Endothelial cell of umbilical vein (primary cell): ENCODE measurements at regions of chr4 and their contacts with region 1.

Region 1: DNA sequence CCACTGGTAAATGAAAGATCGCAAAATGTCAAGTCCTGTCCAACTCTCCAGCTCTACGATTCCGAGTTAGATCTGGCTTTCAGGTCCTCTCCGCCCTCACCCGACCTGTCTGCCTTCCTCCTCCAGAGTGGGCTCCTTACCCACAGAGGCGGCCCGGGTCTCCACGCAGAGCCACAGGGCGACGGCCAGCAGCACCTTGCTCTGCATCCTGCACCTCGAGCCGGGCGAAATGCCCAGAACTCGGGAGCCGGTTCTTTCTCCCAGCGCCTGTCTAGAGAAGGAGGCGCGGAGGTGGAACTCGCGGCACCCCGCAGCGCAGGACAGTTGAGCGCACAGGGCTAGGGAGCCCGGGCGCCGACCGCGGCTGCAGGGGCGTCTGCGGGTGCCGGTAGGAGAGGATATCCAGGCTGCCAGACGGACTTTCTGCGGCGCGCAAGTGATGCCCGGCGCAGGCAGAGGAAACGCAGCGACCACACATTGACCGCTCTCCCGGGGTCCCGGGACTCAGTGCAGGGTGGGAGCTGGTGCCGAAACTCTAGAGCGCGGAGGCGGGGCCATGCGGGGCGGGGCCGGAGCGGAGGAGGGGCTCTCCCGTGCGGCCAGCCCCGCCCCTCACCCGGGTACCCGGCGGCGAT is at the start of gene KDR:
- DNase-seq: peak; percentile 68
- H3K4me3 ChIP-seq: peak within 1 kb of the TSS; percentile 92 to 94 (median 93)
- H3K27ac ChIP-seq: peak within 1 kb of the TSS; percentile 54
- H3K4me1 ChIP-seq: peaks cover 41% of the 10 kb centered on the region
- H3K27me3 ChIP-seq: no peaks in the 10 kb centered on the region
- CTCF ChIP-seq: no peak
- POLR2A ChIP-seq: peak; percentile 98
- total RNA-seq, gene KDR: 139 and 145 TPM in 2 replicates

Region 2: DNA sequence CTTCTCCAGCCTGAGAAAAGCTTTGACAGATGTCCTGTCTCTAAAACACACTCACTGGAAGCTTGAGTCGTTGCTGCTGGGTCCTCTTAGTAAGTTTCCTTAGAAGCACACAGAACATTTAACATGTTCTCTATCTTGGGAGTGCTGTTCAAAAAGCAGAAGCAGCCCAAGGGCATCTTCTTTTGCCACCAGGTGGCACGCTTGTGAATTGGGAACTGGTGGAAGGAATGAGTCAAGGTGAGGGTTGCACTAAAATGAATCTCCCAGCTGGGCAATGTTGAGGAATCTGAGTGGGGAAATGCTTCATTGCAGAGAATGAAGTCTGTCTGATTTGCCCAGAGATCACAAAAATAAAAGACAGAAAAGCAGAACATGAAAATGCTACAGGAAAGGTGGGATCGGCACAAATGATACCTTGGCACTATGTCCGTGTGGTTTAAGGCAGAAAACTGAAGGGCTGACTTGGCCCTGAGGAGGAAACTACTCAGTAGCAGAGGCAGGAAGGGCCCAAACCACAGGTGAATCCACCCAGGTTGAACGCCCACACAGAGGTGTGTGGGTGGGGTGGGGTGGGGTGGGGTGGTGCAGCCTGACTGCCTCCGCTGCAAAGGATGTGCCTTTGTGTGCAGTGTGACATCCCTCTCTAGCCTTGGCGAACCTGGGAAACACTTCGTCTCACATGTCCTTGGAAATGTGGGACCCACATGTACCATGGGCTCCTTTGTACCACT is 441.4 kb before region 1 on chr4:
- CTCF ChIA-PET with region 1: no interaction called
- POLR2A ChIA-PET with region 1: no interaction called
- dilution Hi-C with region 1: no loop called
- intact Hi-C with region 1: no loop called
- DNase-seq: peak; percentile 39
- H3K4me3 ChIP-seq: no peak overlapping the region
- H3K27ac ChIP-seq: no peak overlapping the region
- H3K4me1 ChIP-seq: no peaks in the 10 kb centered on the region
- H3K27me3 ChIP-seq: peaks cover 0 to 1% of the 10 kb centered on the region in 2 experiments
- CTCF ChIP-seq: peak; percentile 20 to 36
- POLR2A ChIP-seq: no peak

Region 3: DNA sequence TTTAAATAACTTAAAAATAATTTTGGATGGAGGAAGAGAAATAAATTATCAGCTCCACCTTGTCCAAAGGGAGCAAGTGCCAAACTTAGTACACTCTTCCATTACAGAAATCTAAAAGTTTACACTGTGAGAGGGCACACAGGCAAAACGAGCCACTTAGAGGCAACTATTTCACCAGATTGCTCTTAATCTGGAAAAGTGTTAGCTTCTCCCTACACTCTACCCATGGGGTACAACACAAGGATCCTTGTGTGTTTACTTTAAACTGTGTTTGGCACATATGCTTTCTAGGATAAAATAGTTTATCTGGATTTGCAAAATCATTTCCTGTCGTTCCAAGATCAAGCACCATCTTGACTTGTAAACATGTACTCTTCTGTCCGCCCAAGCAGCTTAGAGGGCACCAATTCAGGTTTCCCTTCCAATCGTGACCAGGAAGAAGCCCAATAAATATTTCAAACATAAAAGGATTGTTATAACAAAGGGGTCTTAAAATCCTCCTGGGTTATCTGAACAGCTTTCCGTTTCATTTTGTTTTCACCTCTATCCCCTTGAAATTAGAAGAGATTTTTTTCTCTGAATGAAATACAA is 29.2 kb after region 1 on chr4:
- CTCF ChIA-PET with region 1: interaction called, 4 read pairs
- POLR2A ChIA-PET with region 1: interaction called, 5 read pairs
- dilution Hi-C with region 1: no loop called
- intact Hi-C with region 1: loop called (anchors 1 kb)
- DNase-seq: peak; percentile 75
- H3K4me3 ChIP-seq: no peak overlapping the region
- H3K27ac ChIP-seq: no peak overlapping the region
- H3K4me1 ChIP-seq: peaks cover 12% of the 10 kb centered on the region
- H3K27me3 ChIP-seq: no peaks in the 10 kb centered on the region
- CTCF ChIP-seq: no peak
- POLR2A ChIP-seq: no peak

Region 4: GRCh38 chr4:55184600-55185523 is 59.7 kb after region 1 on chr4:
- CTCF ChIA-PET with region 1: interaction called, 17 read pairs
- POLR2A ChIA-PET with region 1: interaction called, 27 read pairs
- dilution Hi-C with region 1: no loop called
- intact Hi-C with region 1: loop called (anchors 1 kb)
- DNase-seq: no peak
- H3K4me3 ChIP-seq: no peak overlapping the region
- H3K27ac ChIP-seq: peak overlapping the region; percentile 63
- H3K4me1 ChIP-seq: peaks cover 64% of the 10 kb centered on the region
- H3K27me3 ChIP-seq: no peaks in the 10 kb centered on the region
- CTCF ChIP-seq: peak in 1 of 2 donors; percentile 30
- POLR2A ChIP-seq: no peak

Region 5: DNA sequence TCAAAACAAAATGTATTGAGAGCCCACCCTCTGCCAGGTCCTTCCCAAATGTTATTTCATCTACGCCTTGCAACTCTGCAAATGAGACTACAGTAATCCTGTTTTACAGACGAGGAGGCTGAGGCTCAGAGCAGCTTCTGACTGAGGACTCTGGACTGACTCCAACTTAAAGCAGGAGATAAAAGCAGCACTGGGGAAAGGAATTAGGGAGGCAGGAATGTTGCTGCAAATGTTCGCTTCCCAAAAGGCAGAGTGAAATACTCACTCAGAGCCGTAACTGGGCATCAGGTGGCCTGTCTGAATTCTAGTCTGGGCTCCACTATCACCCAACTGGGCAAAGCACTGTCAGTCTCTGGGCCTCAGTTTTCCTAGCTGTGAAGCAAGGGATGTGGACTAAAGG is 126.1 kb after region 1 on chr4:
- CTCF ChIA-PET with region 1: interaction called, 3 read pairs
- POLR2A ChIA-PET with region 1: interaction called, 4 read pairs
- dilution Hi-C with region 1: no loop called
- intact Hi-C with region 1: loop called (anchors 2 kb)
- DNase-seq: peak; percentile 35
- H3K4me3 ChIP-seq: no peak overlapping the region
- H3K27ac ChIP-seq: peak overlapping the region; percentile 24
- H3K4me1 ChIP-seq: peaks cover 41% of the 10 kb centered on the region
- H3K27me3 ChIP-seq: no peaks in the 10 kb centered on the region
- CTCF ChIP-seq: no peak
- POLR2A ChIP-seq: no peak

Region 6: GRCh38 chr4:55312489-55313101 is 187.4 kb after region 1 on chr4:
- CTCF ChIA-PET with region 1: interaction called, 10 read pairs
- POLR2A ChIA-PET with region 1: interaction called, 4 read pairs
- dilution Hi-C with region 1: no loop called
- intact Hi-C with region 1: no loop called
- DNase-seq: peak; percentile 63
- H3K4me3 ChIP-seq: no peak overlapping the region
- H3K27ac ChIP-seq: no peak overlapping the region
- H3K4me1 ChIP-seq: no peaks in the 10 kb centered on the region
- H3K27me3 ChIP-seq: no peaks in the 10 kb centered on the region
- CTCF ChIP-seq: peak; percentile 60 to 76
- POLR2A ChIP-seq: no peak

Region 7: DNA sequence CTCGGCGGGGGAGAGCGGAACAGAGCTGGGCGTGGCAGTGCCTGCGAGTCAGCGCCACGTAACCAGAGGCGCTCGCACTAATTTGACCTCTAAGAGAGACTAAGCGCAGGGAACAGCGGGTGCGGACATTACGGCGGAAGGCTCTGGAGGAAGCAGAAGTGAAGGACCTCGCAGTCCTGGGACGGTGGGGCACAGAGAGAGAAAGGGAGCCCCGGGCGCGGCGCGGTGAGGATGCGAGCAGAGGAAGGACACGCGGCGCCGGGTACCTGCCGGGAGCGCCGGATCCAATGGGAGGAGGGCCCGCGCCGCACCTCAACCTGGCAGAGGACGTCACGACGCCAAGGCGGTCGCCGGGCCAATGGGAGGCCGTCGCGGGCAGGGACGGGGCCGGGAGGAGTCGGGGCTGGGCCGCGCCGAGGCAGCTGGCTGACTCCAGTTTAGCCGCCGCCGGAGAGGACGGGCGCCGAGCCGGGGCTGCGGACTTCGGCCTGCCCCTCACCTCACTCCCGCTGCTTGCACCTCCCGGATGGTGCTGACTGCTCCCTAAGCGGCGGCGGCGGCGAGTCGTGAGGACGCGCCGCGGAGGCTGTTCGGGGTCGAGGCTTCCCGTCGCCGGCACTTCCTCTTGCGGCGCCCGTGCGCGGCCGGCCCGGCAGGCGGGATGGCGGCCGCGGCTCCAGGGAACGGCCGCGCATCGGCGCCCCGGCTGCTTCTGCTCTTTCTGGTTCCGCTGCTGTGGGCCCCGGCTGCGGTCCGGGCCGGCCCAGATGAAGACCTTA is 270.5 kb after region 1 on chr4 and contains the start of gene TMEM165:
- CTCF ChIA-PET with region 1: no interaction called
- POLR2A ChIA-PET with region 1: no interaction called
- dilution Hi-C with region 1: no loop called
- intact Hi-C with region 1: loop called (anchors 2 kb)
- DNase-seq: peak; percentile 88
- H3K4me3 ChIP-seq: peak within 1 kb of the TSS; percentile 89 to 98 (median 91)
- H3K27ac ChIP-seq: peak within 1 kb of the TSS; percentile 79
- H3K4me1 ChIP-seq: peaks cover 19% of the 10 kb centered on the region
- H3K27me3 ChIP-seq: no peaks in the 10 kb centered on the region
- CTCF ChIP-seq: no peak
- POLR2A ChIP-seq: peak; percentile 97
- total RNA-seq, gene TMEM165: 159 and 177 TPM in 2 replicates